ENCODE measurements at regions of chr21 and their contacts with region 1.

Region 1: GRCh38 chr21:18384771-18385170 is 18.8 kb downstream of the TMPRSS15 start:
- DNase-seq: no peak
- H3K4me3 ChIP-seq: no peak overlapping the region
- H3K27ac ChIP-seq: no peak overlapping the region
- H3K4me1 ChIP-seq: no peaks in the 10 kb centered on the region
- H3K27me3 ChIP-seq: no peaks in the 10 kb centered on the region
- CTCF ChIP-seq: peak in 2 of 3 experiments; percentile 10 to 53; a peak in 2 of 4 replicates
- EP300 ChIP-seq: no peak
- POLR2A ChIP-seq: no peak
- RAD21 ChIP-seq: peak; percentile 47 to 50; a peak in 3 of 4 replicates

Region 2: GRCh38 chr21:18285379-18285778 is 99.4 kb before region 1 on chr21:
- CTCF ChIA-PET with region 1: no interaction called
- POLR2A ChIA-PET with region 1: no interaction called
- DNase-seq: no peak
- H3K4me3 ChIP-seq: no peak overlapping the region
- H3K27ac ChIP-seq: no peak overlapping the region
- H3K4me1 ChIP-seq: no peaks in the 10 kb centered on the region
- H3K27me3 ChIP-seq: no peaks in the 10 kb centered on the region
- CTCF ChIP-seq: no peak
- EP300 ChIP-seq: no peak
- POLR2A ChIP-seq: no peak
- RAD21 ChIP-seq: no peak

Region 3: DNA sequence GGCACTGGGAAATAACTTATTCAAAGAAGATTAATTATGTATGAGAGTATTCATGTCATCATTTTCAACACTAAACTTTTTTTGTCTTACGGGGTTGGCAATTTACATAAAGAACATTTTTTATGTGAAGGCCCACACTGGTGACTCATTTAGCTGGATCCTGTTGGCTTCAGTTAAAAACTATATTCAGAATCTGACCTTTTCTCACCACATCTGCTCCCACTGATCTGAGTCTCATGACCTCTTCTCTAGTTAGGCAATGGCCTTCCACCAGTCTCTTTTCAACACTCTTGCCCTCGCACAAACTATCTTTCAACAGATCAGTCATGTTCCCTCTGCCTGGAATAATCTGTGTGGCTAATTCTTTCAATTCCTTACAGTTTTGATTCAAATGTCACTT is 34.6 kb before region 1 on chr21:
- CTCF ChIA-PET with region 1: no interaction called
- POLR2A ChIA-PET with region 1: no interaction called
- DNase-seq: no peak
- H3K4me3 ChIP-seq: no peak overlapping the region
- H3K27ac ChIP-seq: no peak overlapping the region
- H3K4me1 ChIP-seq: no peaks in the 10 kb centered on the region
- H3K27me3 ChIP-seq: no peaks in the 10 kb centered on the region
- CTCF ChIP-seq: no peak
- EP300 ChIP-seq: no peak
- POLR2A ChIP-seq: no peak
- RAD21 ChIP-seq: no peak

Region 4: DNA sequence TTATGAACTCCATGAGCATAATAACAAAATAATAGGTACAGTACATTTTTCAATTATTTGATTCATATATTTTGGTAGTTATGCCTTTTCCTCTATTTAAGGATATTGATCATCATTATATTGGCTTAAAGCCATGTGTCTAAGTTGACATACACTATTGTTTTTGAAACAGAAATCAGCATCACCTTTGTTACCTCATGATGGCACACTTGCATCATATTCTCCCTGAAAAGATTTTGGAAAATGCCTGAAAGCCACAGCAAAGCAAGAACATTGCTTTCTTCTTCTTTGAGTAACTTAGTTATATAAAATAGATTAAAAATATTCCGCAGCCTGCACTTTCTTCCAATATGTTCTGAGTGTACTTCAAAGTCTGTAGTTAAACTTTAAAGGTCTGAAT is 14.5 kb before region 1 on chr21:
- CTCF ChIA-PET with region 1: interaction called, 10 read pairs
- POLR2A ChIA-PET with region 1: no interaction called
- DNase-seq: no peak
- H3K4me3 ChIP-seq: no peak overlapping the region
- H3K27ac ChIP-seq: no peak overlapping the region
- H3K4me1 ChIP-seq: no peaks in the 10 kb centered on the region
- H3K27me3 ChIP-seq: no peaks in the 10 kb centered on the region
- CTCF ChIP-seq: no peak
- EP300 ChIP-seq: no peak
- POLR2A ChIP-seq: no peak
- RAD21 ChIP-seq: peak; percentile 6 to 13; a peak in 2 of 4 replicates